ENCODE measurements at regions of chr17 and their contacts with region 1.

Region 1: DNA sequence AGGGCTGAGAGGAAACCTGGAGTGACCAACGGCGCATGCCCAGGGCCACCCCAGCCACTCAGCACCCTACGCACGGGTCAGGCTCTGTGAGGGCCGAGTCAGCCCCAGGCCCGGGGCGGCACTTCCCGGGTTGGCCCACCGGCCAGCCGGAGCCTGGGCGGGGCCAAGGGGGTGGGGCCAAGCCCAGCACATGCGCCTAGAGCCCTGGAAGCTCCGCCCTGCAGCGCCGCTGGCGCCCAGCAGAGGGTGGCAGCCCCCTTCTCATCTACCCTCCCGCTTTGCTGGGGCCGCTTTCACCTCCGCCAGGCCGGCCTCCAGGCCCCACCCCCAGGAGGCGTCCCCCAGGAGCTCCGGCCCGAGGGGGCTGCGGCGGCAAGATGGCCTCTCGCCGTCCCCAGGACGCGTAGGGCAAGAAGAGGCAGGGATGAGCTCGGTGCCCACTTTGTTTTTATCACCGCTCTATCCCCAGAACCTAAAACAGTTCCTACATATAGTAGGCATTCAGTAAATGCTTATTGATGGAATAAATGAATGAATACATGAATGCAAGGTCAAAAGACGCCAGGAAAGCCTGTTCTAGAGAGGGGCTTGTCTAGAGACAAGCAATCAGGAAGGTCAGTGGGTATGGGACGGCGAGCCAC is 31.3 kb downstream of the MYO18A start:
- DNase-seq: peak; percentile 95
- H3K4me3 ChIP-seq: peak overlapping the region; percentile 53 to 56
- H3K27ac ChIP-seq: peak overlapping the region; percentile 35 to 83
- H3K4me1 ChIP-seq: peaks cover 14% of the 10 kb centered on the region
- H3K27me3 ChIP-seq: no peaks in the 10 kb centered on the region
- CTCF ChIP-seq: peak; percentile 85 to 96 (median 95)
- POLR2A ChIP-seq: no peak

Region 2: GRCh38 chr17:28982131-28982951 is 166.6 kb before region 1 on chr17:
- intact Hi-C with region 1: no loop called
- DNase-seq: peak; percentile 24
- H3K4me3 ChIP-seq: no peak overlapping the region
- H3K27ac ChIP-seq: no peak overlapping the region
- H3K4me1 ChIP-seq: no peaks in the 10 kb centered on the region
- H3K27me3 ChIP-seq: no peaks in the 10 kb centered on the region
- CTCF ChIP-seq: no peak
- POLR2A ChIP-seq: no peak

Region 3: DNA sequence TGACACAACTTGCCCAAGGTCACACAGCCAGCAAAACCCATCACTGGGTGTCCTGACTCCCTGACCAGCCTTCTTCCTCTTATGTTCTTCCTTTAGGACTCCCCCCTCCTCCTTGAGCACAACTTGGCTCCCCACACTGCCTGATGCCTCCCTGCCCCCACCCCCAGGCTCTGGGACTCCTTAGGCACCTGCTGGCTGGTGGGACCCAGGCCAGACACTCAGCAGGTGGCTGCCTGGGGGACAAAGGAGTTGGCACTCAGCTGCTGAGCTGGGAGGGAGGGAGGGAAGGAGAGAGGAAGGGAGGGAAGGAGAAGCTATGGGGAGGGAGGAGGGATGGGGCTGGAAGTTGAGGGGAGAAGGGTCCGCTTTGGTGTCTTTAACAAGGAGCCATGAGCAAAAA is 151.1 kb before region 1 on chr17:
- intact Hi-C with region 1: no loop called
- DNase-seq: no peak
- H3K4me3 ChIP-seq: no peak overlapping the region
- H3K27ac ChIP-seq: no peak overlapping the region
- H3K4me1 ChIP-seq: no peaks in the 10 kb centered on the region
- H3K27me3 ChIP-seq: no peaks in the 10 kb centered on the region
- CTCF ChIP-seq: no peak
- POLR2A ChIP-seq: no peak

Region 4: DNA sequence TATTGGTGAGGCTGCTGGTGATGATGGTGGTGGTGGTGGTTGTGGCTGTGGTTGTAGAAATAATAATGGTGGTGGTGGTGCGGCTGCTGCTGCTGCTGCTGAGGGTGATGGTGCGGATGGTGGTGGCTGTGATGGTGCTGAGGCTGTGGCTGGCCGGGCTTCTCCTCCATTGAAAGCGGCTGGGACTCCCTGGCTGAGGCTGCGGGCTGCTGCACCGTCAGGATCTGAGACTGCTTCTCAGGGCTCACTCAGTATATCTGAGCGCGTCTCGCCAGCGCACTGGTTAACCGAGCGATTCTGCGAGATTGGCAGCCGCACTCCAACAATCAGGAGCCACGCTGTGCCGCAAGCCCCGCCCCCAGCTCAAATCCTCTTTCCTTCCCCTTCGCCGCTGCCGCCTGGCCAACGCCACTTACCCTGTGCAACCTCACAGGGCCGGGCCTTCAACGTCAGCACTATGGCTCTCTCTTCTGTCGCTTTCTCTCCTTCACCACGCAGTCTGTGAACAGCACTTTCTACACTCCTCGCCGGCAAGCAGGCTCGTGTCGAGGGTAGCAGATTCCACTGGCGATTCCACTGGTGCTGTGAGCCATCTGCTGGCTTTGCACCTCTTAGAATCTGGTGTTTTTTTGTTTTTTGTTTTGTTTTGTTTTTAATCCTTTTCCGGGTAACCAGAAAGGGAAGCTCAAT is 145.1 kb after region 1 on chr17 and contains the start of gene NUFIP2:
- intact Hi-C with region 1: loop called (anchors 10 kb)
- DNase-seq: peak; percentile 100
- H3K4me3 ChIP-seq: peak within 1 kb of the TSS; percentile 72 to 94
- H3K27ac ChIP-seq: peak within 1 kb of the TSS; percentile 97 to 99
- H3K4me1 ChIP-seq: peaks cover 24% of the 10 kb centered on the region
- H3K27me3 ChIP-seq: no peaks in the 10 kb centered on the region
- CTCF ChIP-seq: peak in 1 of 3 experiments; percentile 35
- POLR2A ChIP-seq: peak; percentile 98
- total RNA-seq, gene NUFIP2: 33.6 to 39.0 TPM